Caco-2 (cell line): ENCODE measurements at regions of chr7 and their contacts with region 1.

Region 1: DNA sequence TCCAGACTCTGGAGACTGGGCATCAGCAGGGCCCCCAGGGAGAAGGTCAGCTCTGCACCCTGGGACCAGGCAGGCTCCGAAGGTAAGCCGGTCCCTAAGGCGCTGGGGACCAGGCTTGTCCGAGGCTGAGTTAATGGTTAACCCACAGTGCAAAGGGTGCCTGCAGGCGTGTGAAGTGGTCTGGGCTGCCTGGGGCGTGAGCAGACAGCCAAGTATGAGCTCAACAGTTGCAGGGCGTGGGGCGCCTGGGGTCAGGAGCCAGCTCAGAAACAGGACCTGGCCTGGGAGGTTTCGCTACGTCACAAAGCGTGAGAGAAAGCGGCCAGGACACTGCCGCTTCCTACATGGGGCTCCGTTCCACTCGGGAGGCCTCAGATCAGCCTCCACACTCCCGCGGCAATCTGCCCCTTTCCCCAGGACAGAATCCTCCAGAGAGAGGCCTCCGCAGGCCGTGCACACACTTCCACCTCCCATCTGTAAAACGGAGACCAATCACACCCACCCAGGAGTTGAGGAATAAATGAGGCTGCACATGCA is 16.0 kb downstream of the PDGFA start:
- DNase-seq: peak; percentile 98 to 99
- H3K4me3 ChIP-seq: no peak overlapping the region
- H3K4me3 Mint-ChIP-seq: peak overlapping the region; percentile 72
- H3K27ac Mint-ChIP-seq: peak overlapping the region; percentile 100
- H3K4me1 ChIP-seq: peaks cover 40% of the 10 kb centered on the region
- H3K4me1 Mint-ChIP-seq: peaks cover 27% of the 10 kb centered on the region
- H3K27me3 ChIP-seq: no peaks in the 10 kb centered on the region
- H3K27me3 Mint-ChIP-seq: no peaks in the 10 kb centered on the region
- CTCF ChIP-seq: no peak

Region 2: DNA sequence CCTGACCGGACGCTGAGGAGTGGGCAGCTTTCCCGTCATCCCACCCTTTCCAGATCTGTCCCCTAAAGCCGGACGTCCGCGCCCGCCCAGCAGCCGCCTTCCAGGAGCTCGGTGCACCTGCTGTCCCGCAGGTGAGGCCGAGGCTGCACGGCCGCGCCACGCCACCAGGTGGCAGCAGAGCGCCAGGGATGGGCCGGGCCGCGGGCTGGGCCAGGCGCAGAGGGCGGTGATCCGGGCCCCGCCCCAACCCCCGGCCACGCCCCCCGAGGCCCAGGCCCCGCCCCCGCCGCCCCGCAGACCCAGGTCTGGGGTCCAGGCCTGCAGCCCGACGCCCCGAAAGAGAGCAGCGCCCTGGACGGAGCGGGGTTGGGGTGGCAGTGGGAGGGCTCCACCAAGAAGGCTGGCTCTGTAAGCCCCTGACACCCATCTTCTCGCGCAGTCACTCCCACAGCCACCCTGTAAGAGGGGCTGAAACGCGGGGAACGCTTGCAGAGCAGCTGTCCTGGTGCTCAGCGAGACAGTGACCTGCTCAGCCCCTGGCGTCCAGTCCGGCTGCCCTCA is 181.5 kb before region 1 on chr7:
- CTCF ChIA-PET with region 1: interaction called, 12 read pairs
- POLR2A ChIA-PET with region 1: interaction called, 11 read pairs
- intact Hi-C with region 1: no loop called
- DNase-seq: peak; percentile 77 to 96
- H3K4me3 ChIP-seq: no peak overlapping the region
- H3K4me3 Mint-ChIP-seq: peak overlapping the region; percentile 29
- H3K27ac Mint-ChIP-seq: no peak overlapping the region
- H3K4me1 ChIP-seq: peaks cover 62% of the 10 kb centered on the region
- H3K4me1 Mint-ChIP-seq: peaks cover 50% of the 10 kb centered on the region
- H3K27me3 ChIP-seq: no peaks in the 10 kb centered on the region
- H3K27me3 Mint-ChIP-seq: no peaks in the 10 kb centered on the region
- CTCF ChIP-seq: peak; percentile 81 to 93

Region 3: DNA sequence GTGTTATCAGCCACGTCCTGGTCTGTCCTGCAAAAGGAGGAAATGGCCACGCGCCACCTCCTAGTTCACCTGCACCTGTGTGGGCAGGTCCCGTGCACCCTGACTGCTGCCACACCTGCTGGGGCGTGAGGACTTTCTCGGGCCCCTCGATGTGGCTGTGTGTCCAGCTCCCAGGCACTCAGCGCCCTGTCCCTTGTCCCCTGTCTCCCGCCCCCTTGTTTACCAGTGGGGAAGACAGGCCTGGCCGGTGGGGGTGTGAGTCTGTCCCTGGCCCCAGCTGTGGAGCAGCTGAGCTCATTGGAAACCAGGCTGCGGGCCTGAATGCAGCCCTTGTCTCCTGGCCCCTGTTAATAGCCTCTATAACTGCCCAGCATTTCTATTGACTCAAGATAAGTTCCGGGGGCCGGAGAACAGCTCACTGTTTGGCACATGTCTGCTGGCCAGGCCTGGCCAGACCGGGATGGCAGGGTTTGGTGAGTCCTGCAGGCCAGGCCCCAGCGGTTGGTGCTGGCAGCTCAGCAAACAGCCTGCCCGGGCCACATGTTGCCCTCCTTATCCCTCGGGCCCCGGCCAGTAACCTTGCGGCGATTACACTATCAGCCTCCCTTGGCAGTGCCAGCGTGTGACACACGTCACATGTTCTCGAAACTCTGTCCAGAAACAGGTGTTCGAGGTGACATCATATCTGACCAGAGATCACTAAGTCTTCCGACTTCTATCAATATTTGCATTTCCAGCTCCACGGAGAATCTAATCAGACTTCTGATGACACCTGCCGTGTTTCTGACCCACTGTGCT is 161.6 kb before region 1 on chr7:
- CTCF ChIA-PET with region 1: interaction called, 16 read pairs
- POLR2A ChIA-PET with region 1: interaction called, 20 read pairs
- intact Hi-C with region 1: loop called (anchors 1 kb)
- DNase-seq: peak; percentile 83 to 89
- H3K4me3 ChIP-seq: no peak overlapping the region
- H3K4me3 Mint-ChIP-seq: peak overlapping the region; percentile 48
- H3K27ac Mint-ChIP-seq: peak overlapping the region; percentile 92
- H3K4me1 ChIP-seq: peaks cover 66% of the 10 kb centered on the region
- H3K4me1 Mint-ChIP-seq: peaks cover 52% of the 10 kb centered on the region
- H3K27me3 ChIP-seq: no peaks in the 10 kb centered on the region
- H3K27me3 Mint-ChIP-seq: no peaks in the 10 kb centered on the region
- CTCF ChIP-seq: no peak

Region 4: GRCh38 chr7:435630-436366 is 67.8 kb before region 1 on chr7:
- CTCF ChIA-PET with region 1: interaction called, 10 read pairs
- POLR2A ChIA-PET with region 1: interaction called, 9 read pairs
- intact Hi-C with region 1: loop called (anchors 1 kb)
- DNase-seq: peak in 1 of 2 experiments; percentile 34
- H3K4me3 ChIP-seq: no peak overlapping the region
- H3K4me3 Mint-ChIP-seq: peak overlapping the region; percentile 66
- H3K27ac Mint-ChIP-seq: peak overlapping the region; percentile 90
- H3K4me1 ChIP-seq: peaks cover 40% of the 10 kb centered on the region
- H3K4me1 Mint-ChIP-seq: peaks cover 20% of the 10 kb centered on the region
- H3K27me3 ChIP-seq: no peaks in the 10 kb centered on the region
- H3K27me3 Mint-ChIP-seq: no peaks in the 10 kb centered on the region
- CTCF ChIP-seq: no peak

Region 5: GRCh38 chr7:537911-538634 is 34.4 kb after region 1 on chr7:
- CTCF ChIA-PET with region 1: no interaction called
- POLR2A ChIA-PET with region 1: interaction called, 9 read pairs
- intact Hi-C with region 1: loop called (anchors 2 kb)
- DNase-seq: peak; percentile 95 to 98
- H3K4me3 ChIP-seq: no peak overlapping the region; the same call in 1 of the 2 replicates
- H3K4me3 Mint-ChIP-seq: peak overlapping the region; percentile 68
- H3K27ac Mint-ChIP-seq: peak overlapping the region; percentile 97
- H3K4me1 ChIP-seq: peaks cover 47% of the 10 kb centered on the region
- H3K4me1 Mint-ChIP-seq: peaks cover 28% of the 10 kb centered on the region
- H3K27me3 ChIP-seq: no peaks in the 10 kb centered on the region
- H3K27me3 Mint-ChIP-seq: no peaks in the 10 kb centered on the region
- CTCF ChIP-seq: no peak